Activated CD4-positive, alpha-beta T cell treated with anti-CD3 and anti-CD28 coated beads, Interleukin-2, amount 10 ng/mL, durations not matched to agents 24 days and 14 days (primary cell): ENCODE measurements at regions of chr3 and their contacts with region 1.

Region 1: DNA sequence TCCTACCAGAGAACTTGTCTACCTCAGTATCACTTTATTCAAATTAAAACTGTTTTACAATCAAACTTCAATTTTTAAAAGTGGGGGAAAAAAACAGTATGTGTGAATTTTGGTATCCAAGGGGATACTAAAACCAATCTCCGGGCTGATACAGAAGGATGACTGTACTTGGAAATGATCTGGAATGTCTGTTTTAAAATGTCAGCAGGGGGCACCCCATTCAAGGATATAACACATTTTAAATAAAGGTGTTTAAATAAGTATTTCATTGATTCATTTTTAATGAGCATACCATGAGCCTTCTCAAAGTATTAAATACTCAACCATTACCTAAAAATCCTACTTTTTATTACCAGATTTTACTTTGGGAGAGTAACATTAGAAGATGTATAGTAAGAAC is 67.9 kb downstream of the ULK4 start:
- DNase-seq: peak; percentile 62
- H3K4me3 Mint-ChIP-seq: no peak overlapping the region
- H3K27ac Mint-ChIP-seq: no peak overlapping the region
- H3K4me1 Mint-ChIP-seq: peaks cover 2% of the 10 kb centered on the region
- H3K27me3 Mint-ChIP-seq: no peaks in the 10 kb centered on the region

Region 2: GRCh38 chr3:41808152-41808551 is 85.8 kb before region 1 on chr3:
- intact Hi-C with region 1: no loop called
- DNase-seq: no peak
- H3K4me3 Mint-ChIP-seq: no peak overlapping the region
- H3K27ac Mint-ChIP-seq: no peak overlapping the region
- H3K4me1 Mint-ChIP-seq: no peaks in the 10 kb centered on the region
- H3K27me3 Mint-ChIP-seq: no peaks in the 10 kb centered on the region

Region 3: DNA sequence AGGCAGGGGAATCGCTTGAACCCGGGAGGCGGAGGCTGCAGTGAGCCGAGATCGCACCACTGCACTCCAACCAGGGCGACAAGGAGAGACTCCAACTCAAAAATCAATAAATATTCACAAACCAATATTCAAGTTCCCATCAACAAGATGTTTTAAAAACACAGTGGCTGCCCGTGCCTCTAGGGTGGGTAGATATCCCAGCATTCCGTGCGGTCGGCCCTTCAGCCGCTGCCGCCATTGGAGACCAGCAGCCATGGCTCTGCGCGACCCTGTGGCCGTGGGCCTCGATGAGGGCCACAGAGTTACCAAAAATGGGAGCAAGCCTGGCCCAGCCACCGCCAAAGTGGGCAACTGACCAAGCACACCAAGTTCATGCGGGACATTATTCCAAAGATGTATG is 61.2 kb after region 1 on chr3:
- intact Hi-C with region 1: no loop called
- DNase-seq: no peak
- H3K4me3 Mint-ChIP-seq: no peak overlapping the region
- H3K27ac Mint-ChIP-seq: no peak overlapping the region
- H3K4me1 Mint-ChIP-seq: peaks cover 8% of the 10 kb centered on the region
- H3K27me3 Mint-ChIP-seq: no peaks in the 10 kb centered on the region

Region 4: GRCh38 chr3:42012935-42013690 is 119.1 kb after region 1 on chr3:
- intact Hi-C with region 1: loop called (anchors 10 kb)
- DNase-seq: peak; percentile 91
- H3K4me3 Mint-ChIP-seq: peak overlapping the region; percentile 84
- H3K27ac Mint-ChIP-seq: peak overlapping the region; percentile 93
- H3K4me1 Mint-ChIP-seq: peaks cover 38% of the 10 kb centered on the region
- H3K27me3 Mint-ChIP-seq: no peaks in the 10 kb centered on the region

Region 5: DNA sequence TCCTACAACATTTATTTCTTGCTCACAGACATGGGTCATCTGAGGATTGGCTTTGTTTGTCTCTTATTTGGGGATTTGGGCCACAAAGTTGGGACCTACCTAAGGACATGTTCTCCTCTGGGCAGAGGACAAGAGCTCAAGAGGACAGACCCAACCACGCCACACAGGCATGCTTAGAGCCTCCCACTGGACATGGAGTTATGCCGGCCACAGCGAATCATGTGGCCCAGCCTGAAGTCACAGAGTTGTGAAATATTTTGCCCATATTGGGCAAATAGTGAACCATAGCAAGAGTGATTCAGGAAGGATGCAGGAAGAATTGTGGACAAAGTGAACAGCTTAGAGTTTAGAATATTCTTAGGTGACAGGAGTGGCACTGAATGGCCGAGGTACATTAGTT is 207.1 kb after region 1 on chr3:
- intact Hi-C with region 1: loop called (anchors 1 kb)
- DNase-seq: no peak
- H3K4me3 Mint-ChIP-seq: no peak overlapping the region
- H3K27ac Mint-ChIP-seq: no peak overlapping the region
- H3K4me1 Mint-ChIP-seq: peaks cover 30% of the 10 kb centered on the region
- H3K27me3 Mint-ChIP-seq: no peaks in the 10 kb centered on the region

Region 6: DNA sequence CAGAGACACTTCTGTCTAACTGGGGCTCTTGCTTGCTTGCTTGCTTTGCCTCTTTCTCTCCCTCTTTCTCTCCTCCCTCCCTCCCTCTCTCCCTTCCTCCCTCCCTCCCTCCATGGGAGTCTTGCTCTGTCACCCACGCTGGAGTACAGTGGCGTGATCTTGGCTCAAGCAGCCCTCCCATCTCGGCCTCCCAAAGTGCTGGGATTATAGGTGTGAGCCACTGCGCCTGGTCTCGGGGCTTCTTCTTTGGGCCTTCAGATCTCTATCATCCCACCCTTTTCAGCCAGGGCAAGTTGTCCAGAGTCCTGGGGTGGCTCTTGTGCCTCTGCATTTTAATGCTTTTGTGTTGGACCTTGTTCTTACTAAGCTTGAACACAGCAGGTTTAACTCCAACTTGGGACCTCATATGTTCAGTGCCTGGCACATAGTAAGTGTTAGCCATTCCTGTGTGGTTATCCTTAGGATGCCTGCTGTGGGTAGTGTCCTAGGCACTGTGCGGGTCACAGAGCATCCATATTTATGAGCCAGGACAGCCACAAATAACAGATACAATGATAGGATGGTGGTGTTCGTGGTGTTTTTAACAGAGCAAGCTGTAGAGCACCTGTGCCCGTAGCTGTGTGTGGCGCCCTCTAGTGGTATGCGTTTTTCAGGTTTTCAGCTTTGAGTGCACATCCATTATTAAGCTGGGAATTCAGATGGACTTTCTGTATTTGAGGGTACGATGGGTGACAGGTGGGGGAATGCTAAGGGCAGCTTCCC is 296.9 kb after region 1 on chr3:
- intact Hi-C with region 1: loop called (anchors 2 kb)
- DNase-seq: peak; percentile 91
- H3K4me3 Mint-ChIP-seq: no peak overlapping the region
- H3K27ac Mint-ChIP-seq: peak overlapping the region; percentile 52
- H3K4me1 Mint-ChIP-seq: peaks cover 28% of the 10 kb centered on the region
- H3K27me3 Mint-ChIP-seq: no peaks in the 10 kb centered on the region

Region 7: GRCh38 chr3:42443819-42444436 is 550.0 kb after region 1 on chr3:
- intact Hi-C with region 1: loop called (anchors 10 kb)
- DNase-seq: peak; percentile 93
- H3K4me3 Mint-ChIP-seq: no peak overlapping the region
- H3K27ac Mint-ChIP-seq: no peak overlapping the region
- H3K4me1 Mint-ChIP-seq: no peaks in the 10 kb centered on the region
- H3K27me3 Mint-ChIP-seq: peaks cover 7% of the 10 kb centered on the region

Region 8: DNA sequence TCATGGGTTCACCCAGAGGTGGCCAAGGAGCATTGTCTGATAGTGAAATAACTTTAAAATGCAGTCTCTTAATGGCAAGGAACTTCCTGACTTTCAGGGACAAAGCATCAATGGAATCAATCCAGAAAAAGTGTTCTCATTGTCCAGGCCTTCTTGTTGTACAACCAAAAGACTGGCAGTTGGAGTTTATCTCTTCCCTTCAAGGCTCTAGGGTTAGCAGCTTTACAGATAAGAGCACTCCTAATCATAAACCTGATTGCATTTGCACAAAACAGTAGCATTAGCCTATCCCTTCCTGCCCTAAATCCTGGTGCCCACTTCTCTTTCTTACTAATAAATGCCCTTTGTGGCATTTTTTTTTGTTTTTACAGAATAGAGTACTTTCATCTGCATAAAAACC is 565.2 kb after region 1 on chr3:
- intact Hi-C with region 1: no loop called
- DNase-seq: no peak
- H3K4me3 Mint-ChIP-seq: no peak overlapping the region
- H3K27ac Mint-ChIP-seq: no peak overlapping the region
- H3K4me1 Mint-ChIP-seq: no peaks in the 10 kb centered on the region
- H3K27me3 Mint-ChIP-seq: peaks cover 18% of the 10 kb centered on the region